Breast epithelium (tissue), 4 donors: ENCODE measurements at regions of chr1 and their contacts with region 1.

Region 1: DNA sequence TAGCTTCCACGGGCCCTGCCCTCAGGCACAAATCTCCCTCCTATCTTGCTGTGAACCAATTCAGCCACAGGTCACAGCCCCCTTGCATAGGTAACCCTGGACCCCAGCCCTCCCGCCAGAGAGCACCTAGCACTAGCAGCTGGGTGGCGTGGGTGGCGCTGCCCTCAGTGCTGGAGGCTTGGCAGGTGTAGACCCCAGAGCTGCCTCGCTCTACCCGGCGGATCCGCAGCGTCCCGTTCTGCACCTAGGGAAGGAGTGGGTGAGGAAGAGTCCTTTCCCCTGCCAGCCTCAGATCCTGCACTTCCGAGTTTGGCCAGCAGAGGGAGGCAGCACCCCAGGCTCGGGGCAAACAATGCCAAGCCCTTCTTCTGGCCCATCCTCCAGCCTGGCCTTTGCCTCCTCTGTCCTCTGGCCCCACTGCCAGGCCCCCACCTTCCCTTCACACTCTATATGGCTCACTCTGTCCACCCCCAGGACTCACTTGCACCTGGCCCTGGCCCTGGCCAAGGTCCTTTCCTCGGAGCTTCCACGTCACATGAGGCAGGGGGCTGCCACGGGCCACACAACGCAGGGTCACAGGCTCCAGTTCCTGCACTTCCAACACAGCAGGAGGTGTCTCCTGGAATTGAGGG is 9.0 kb downstream of the IGSF9 start:
- DNase-seq: peak; percentile 58 to 85
- H3K4me3 ChIP-seq: no peak overlapping the region
- H3K27ac ChIP-seq: no peak overlapping the region
- H3K4me1 ChIP-seq: peaks cover 0 to 6% of the 10 kb centered on the region in 2 donors
- H3K27me3 ChIP-seq: no peaks in the 10 kb centered on the region
- CTCF ChIP-seq: peak; percentile 97
- POLR2A ChIP-seq: no peak

Region 2: DNA sequence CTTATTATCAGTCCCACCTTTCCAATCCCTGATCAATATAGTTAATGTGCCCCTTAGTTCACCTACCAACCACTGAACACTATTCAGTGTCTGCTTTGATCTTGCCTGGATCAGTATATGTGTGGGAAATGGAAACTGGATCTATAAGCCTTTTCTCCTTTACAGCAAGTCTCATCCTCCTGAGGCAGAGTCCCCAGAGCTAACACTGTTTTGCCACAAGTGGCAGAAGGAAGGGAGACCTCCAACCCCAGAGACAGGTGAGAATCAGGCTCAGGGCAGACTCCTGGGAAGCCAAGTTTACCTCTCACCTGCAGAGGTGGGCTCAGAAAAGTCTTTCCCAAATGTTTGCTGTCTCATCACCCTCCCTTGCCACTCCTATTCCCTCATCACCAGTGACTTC is 1155.3 kb before region 1 on chr1 and contains the start of gene OR6N2:
- intact Hi-C with region 1: no loop called
- DNase-seq: no peak
- H3K4me3 ChIP-seq: no peak within 1 kb of the TSS
- H3K27ac ChIP-seq: no peak within 1 kb of the TSS
- H3K4me1 ChIP-seq: no peaks in the 10 kb centered on the region
- H3K27me3 ChIP-seq: no peaks in the 10 kb centered on the region
- CTCF ChIP-seq: no peak
- POLR2A ChIP-seq: no peak
- total RNA-seq, gene OR6N2: not detected

Region 3: DNA sequence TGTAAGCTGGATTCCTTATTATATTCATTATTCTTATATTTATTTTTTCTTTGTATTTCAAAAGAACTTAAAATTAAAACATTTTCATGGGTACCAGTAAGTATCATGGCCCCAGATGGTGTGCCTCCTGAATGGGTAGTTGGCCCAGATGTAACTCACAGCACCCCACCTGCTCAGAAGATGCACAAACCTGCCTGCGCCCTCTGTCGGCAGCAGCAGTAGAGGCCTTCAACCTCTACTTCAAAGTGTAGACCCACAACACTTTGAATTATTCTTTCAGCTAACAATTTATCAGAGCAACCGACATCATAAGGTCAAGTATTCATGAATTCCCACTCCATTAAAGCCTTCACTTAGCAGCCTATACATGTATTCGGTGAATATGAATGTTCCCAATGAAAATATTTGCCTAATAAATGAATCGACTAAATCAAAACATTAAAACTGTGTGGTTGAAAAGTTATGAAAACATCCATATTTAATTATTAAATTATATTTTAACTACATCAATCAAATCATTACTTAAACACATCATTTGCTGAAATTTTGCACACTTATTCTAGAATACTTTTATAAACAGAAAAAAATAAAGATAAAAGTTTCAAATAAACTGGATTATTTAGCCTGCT is 70.0 kb after region 1 on chr1:
- intact Hi-C with region 1: loop called (anchors 5 kb)
- DNase-seq: peak; percentile 58 to 62
- H3K4me3 ChIP-seq: no peak overlapping the region
- H3K27ac ChIP-seq: no peak overlapping the region
- H3K4me1 ChIP-seq: no peaks in the 10 kb centered on the region
- H3K27me3 ChIP-seq: no peaks in the 10 kb centered on the region
- CTCF ChIP-seq: peak; percentile 61 to 84 (median 71)
- POLR2A ChIP-seq: no peak

Region 4: GRCh38 chr1:160193091-160193819 is 256.9 kb after region 1 on chr1:
- intact Hi-C with region 1: loop called (anchors 10 kb)
- DNase-seq: peak; percentile 76 to 86
- H3K4me3 ChIP-seq: no peak overlapping the region
- H3K27ac ChIP-seq: no peak overlapping the region
- H3K4me1 ChIP-seq: peaks cover 0 to 6% of the 10 kb centered on the region in 2 donors
- H3K27me3 ChIP-seq: no peaks in the 10 kb centered on the region
- CTCF ChIP-seq: peak; percentile 97 to 98 (median 97)
- POLR2A ChIP-seq: no peak